PC-9 (cell line): ENCODE measurements at regions of chr16 and their contacts with region 1.

Region 1: GRCh38 chr16:14672403-14672971 is 21.6 kb downstream of the PLA2G10 start:
- DNase-seq: no peak
- H3K4me3 ChIP-seq: no peak overlapping the region
- H3K27ac ChIP-seq: no peak overlapping the region
- H3K4me1 ChIP-seq: no peaks in the 10 kb centered on the region
- H3K27me3 ChIP-seq: no peaks in the 10 kb centered on the region
- CTCF ChIP-seq: no peak

Region 2: GRCh38 chr16:14549789-14550153 is 122.7 kb before region 1 on chr16:
- CTCF ChIA-PET with region 1: interaction called, 12 read pairs
- POLR2A ChIA-PET with region 1: no interaction called
- intact Hi-C with region 1: no loop called
- DNase-seq: no peak
- H3K4me3 ChIP-seq: no peak overlapping the region
- H3K27ac ChIP-seq: no peak overlapping the region
- H3K4me1 ChIP-seq: no peaks in the 10 kb centered on the region
- H3K27me3 ChIP-seq: no peaks in the 10 kb centered on the region
- CTCF ChIP-seq: no peak